Endothelial cell of umbilical vein (primary cell): ENCODE measurements at regions of chr1 and their contacts with region 1.

Region 1: DNA sequence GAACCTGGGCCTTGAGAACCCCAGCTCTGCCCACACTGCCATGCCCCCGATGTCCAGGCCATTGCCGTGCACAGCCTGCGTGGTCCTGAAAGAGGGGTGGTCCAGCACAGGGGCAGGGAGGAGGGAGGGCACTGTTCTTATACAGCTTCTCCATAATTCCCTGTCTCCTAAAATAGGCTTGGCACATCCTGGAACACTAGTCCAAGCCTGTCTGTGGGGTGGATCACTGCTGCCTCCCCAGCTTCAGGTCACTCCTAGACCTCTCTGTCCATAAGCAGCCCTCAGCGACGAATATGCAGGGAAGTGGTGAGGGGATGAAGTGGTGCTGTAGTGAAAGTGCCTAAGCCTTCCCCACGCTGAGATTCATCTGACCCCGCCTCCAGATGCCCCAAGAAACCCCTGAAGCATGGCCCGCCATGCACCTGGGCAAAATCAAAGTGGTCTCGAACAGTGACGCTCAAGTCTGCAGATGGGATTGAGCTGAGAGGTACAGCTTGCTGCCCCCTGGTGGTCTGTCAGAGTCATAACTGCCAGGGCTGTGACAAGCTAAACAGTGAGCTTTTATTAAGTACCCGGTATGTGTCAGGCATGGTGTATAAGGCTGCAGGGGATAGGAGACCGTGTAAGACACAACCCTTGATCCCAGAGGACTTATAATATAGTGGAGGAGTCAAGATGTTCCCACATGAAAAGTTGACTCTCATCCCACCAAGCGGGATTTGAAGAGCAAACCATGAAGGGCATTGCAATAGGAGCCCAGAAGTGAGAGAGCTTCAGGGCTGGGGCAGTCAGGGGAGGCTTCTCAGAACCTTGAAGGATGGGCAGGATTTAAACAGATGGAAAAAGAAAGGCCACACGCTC is 66.6 kb downstream of the FAM163A start:
- DNase-seq: peak; percentile 75
- H3K4me3 ChIP-seq: no peak overlapping the region
- H3K27ac ChIP-seq: no peak overlapping the region
- H3K4me1 ChIP-seq: no peaks in the 10 kb centered on the region
- H3K27me3 ChIP-seq: peaks cover 2 to 10% of the 10 kb centered on the region in 2 experiments
- CTCF ChIP-seq: peak; percentile 84 to 90
- POLR2A ChIP-seq: no peak

Region 2: GRCh38 chr1:179251675-179252074 is 558.1 kb before region 1 on chr1:
- CTCF ChIA-PET with region 1: interaction called, 17 read pairs
- POLR2A ChIA-PET with region 1: no interaction called
- dilution Hi-C with region 1: no loop called
- intact Hi-C with region 1: no loop called
- DNase-seq: peak; percentile 48
- H3K4me3 ChIP-seq: no peak overlapping the region
- H3K27ac ChIP-seq: no peak overlapping the region
- H3K4me1 ChIP-seq: peaks cover 8% of the 10 kb centered on the region
- H3K27me3 ChIP-seq: no peaks in the 10 kb centered on the region
- CTCF ChIP-seq: peak in 1 of 2 donors; percentile 34
- POLR2A ChIP-seq: no peak

Region 3: DNA sequence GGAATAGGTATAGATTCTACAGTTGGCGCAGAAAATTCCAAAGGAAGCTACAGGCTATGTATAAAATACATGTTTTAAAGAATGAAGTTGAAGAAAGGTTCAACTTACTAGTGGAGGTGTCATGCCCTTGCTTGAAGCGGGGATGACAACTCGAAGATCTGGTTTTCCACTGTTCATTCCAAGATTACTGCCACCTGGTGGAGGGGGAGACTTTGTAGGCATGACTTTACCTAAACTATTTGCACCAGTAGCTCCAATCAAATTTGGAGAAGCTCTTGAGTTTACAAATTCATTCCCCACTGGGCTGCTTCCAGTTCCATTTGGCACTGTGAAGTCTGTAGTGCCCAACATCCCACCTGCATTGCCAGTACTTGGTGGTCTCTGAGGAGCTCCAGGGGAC is 362.2 kb before region 1 on chr1:
- CTCF ChIA-PET with region 1: no interaction called
- POLR2A ChIA-PET with region 1: no interaction called
- dilution Hi-C with region 1: no loop called
- intact Hi-C with region 1: no loop called
- DNase-seq: peak; percentile 4
- H3K4me3 ChIP-seq: no peak overlapping the region
- H3K27ac ChIP-seq: no peak overlapping the region
- H3K4me1 ChIP-seq: no peaks in the 10 kb centered on the region
- H3K27me3 ChIP-seq: no peaks in the 10 kb centered on the region
- CTCF ChIP-seq: peak in 1 of 2 donors; percentile 28
- POLR2A ChIP-seq: no peak

Region 4: DNA sequence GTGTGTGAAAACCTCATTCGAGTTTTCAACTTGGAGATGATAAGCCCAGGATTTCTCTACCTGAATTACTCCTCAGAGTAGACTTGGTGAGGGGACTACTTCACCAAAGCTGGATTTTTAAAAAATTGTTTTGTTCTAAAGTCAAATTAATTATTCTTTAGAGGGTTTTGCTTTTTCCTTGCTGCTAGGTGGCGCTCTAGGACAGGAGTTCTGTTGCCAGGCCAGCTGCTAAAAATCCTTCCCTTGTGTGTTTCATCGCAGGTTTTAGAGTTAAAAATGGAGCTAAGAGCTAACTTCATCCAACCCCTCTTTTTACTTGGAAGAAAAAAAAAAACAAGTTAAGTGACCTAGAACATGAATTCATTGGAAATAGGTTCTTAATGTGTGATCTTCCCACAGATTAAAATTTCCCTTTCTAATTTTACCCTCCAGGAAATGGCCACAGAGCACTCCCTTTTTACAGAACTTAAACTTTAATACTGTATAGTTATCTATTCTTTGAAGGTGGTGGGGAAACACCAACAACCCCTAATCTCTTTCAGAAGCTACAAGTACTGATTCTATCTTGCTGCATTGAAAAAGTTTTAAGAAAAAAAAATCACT is 103.3 kb before region 1 on chr1:
- CTCF ChIA-PET with region 1: interaction called, 1,591 read pairs
- POLR2A ChIA-PET with region 1: interaction called, 7 read pairs
- dilution Hi-C with region 1: loop called (anchors 5 kb)
- intact Hi-C with region 1: loop called (anchors 1 kb)
- DNase-seq: peak; percentile 68
- H3K4me3 ChIP-seq: no peak overlapping the region
- H3K27ac ChIP-seq: no peak overlapping the region
- H3K4me1 ChIP-seq: peaks cover 29% of the 10 kb centered on the region
- H3K27me3 ChIP-seq: peaks cover 7 to 14% of the 10 kb centered on the region in 2 experiments
- CTCF ChIP-seq: peak; percentile 62 to 68
- POLR2A ChIP-seq: no peak

Region 5: GRCh38 chr1:179761296-179761695 is 48.4 kb before region 1 on chr1:
- CTCF ChIA-PET with region 1: interaction called, 19 read pairs
- POLR2A ChIA-PET with region 1: no interaction called
- dilution Hi-C with region 1: no loop called
- intact Hi-C with region 1: no loop called
- DNase-seq: no peak
- H3K4me3 ChIP-seq: no peak overlapping the region
- H3K27ac ChIP-seq: no peak overlapping the region
- H3K4me1 ChIP-seq: no peaks in the 10 kb centered on the region
- H3K27me3 ChIP-seq: peaks cover 12 to 15% of the 10 kb centered on the region in 2 experiments
- CTCF ChIP-seq: no peak
- POLR2A ChIP-seq: no peak

Region 6: DNA sequence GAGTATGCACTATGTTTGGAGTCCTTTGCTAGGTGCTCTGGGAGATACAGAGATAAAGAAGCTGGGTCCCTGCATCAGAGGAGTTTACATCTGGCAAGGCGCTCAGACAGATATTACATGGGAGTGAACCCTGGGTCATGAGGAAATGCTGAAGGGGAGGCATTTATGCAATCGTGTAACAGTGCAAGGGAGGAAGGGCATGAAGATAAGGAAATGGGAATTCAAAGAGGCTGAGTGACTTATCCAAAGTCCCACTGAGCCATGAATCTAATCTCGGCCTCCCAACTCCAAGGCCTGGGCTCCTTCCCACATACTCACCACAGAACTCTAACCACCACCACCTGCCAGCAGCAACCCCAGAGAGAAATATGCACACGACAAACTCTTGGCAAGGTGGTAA is 15.1 kb before region 1 on chr1:
- CTCF ChIA-PET with region 1: interaction called, 39 read pairs
- POLR2A ChIA-PET with region 1: no interaction called
- dilution Hi-C with region 1: no loop called
- intact Hi-C with region 1: no loop called
- DNase-seq: no peak
- H3K4me3 ChIP-seq: no peak overlapping the region
- H3K27ac ChIP-seq: no peak overlapping the region
- H3K4me1 ChIP-seq: no peaks in the 10 kb centered on the region
- H3K27me3 ChIP-seq: peaks cover 0 to 12% of the 10 kb centered on the region in 2 experiments
- CTCF ChIP-seq: no peak
- POLR2A ChIP-seq: no peak

Region 7: GRCh38 chr1:179840107-179840506 is 30.4 kb after region 1 on chr1:
- CTCF ChIA-PET with region 1: interaction called, 96 read pairs
- POLR2A ChIA-PET with region 1: no interaction called
- dilution Hi-C with region 1: no loop called
- intact Hi-C with region 1: no loop called
- DNase-seq: peak; percentile 40
- H3K4me3 ChIP-seq: no peak overlapping the region
- H3K27ac ChIP-seq: no peak overlapping the region
- H3K4me1 ChIP-seq: peaks cover 13% of the 10 kb centered on the region
- H3K27me3 ChIP-seq: no peaks in the 10 kb centered on the region
- CTCF ChIP-seq: no peak
- POLR2A ChIP-seq: no peak

Region 8: GRCh38 chr1:180178511-180179161 is 368.9 kb after region 1 on chr1:
- CTCF ChIA-PET with region 1: interaction called, 36 read pairs
- POLR2A ChIA-PET with region 1: no interaction called
- dilution Hi-C with region 1: no loop called
- intact Hi-C with region 1: loop called (anchors 2 kb)
- DNase-seq: peak; percentile 64
- H3K4me3 ChIP-seq: no peak overlapping the region
- H3K27ac ChIP-seq: no peak overlapping the region
- H3K4me1 ChIP-seq: no peaks in the 10 kb centered on the region
- H3K27me3 ChIP-seq: no peaks in the 10 kb centered on the region
- CTCF ChIP-seq: peak; percentile 91 to 93
- POLR2A ChIP-seq: no peak

Region 9: DNA sequence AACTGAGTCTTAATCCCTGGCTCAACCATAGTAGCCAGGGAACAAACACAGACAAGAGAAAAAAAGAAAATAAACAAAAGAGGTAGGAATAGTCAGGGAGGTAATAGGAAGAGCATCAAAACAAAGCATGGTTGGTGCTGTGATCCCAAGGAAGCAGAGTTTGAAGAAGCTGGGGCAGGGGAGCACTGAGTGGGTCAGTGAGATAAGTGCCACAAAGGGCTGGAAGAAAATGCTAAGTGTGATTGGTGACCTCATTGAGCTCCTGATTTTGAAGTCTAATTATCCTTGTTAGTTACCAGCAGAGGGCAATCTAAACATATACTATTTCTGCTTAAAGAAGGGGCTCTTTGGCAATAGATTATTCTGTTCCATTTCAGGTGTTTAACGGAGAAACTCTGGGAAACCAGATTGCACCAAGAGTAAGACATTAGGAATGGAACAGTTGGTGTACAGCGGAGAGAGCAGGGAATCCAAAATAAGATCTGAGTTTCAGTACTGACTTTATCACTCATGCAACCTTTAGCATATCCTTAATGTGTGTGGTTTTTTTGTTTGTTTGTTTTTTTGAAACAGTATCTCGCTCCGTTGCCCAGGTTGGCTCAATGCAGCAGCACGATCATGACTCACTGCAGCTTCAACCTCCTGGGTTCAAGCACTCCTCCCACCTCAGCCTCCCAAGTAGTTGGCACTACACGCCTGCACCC is 1072.2 kb after region 1 on chr1:
- CTCF ChIA-PET with region 1: no interaction called
- POLR2A ChIA-PET with region 1: no interaction called
- dilution Hi-C with region 1: no loop called
- intact Hi-C with region 1: no loop called
- DNase-seq: peak; percentile 53
- H3K4me3 ChIP-seq: no peak overlapping the region
- H3K27ac ChIP-seq: no peak overlapping the region
- H3K4me1 ChIP-seq: no peaks in the 10 kb centered on the region
- H3K27me3 ChIP-seq: no peaks in the 10 kb centered on the region
- CTCF ChIP-seq: peak; percentile 21 to 38
- POLR2A ChIP-seq: no peak